ENCODE measurements at regions of chr3 and their contacts with region 1.

Region 1: GRCh38 chr3:46585799-46586693 is 19.9 kb upstream of the LRRC2 start:
- DNase-seq: peak; percentile 44 to 74
- H3K4me3 ChIP-seq: no peak overlapping the region
- H3K4me3 Mint-ChIP-seq: peak overlapping the region; percentile 37
- H3K27ac Mint-ChIP-seq: peak overlapping the region; percentile 93
- H3K4me1 ChIP-seq: peaks cover 32% of the 10 kb centered on the region
- H3K4me1 Mint-ChIP-seq: peaks cover 16% of the 10 kb centered on the region
- H3K27me3 ChIP-seq: no peaks in the 10 kb centered on the region
- H3K27me3 Mint-ChIP-seq: no peaks in the 10 kb centered on the region
- CTCF ChIP-seq: no peak

Region 2: GRCh38 chr3:46196261-46196957 is 389.6 kb before region 1 on chr3:
- CTCF ChIA-PET with region 1: no interaction called
- POLR2A ChIA-PET with region 1: no interaction called
- intact Hi-C with region 1: no loop called
- DNase-seq: no peak
- H3K4me3 ChIP-seq: no peak overlapping the region
- H3K4me3 Mint-ChIP-seq: no peak overlapping the region
- H3K27ac Mint-ChIP-seq: no peak overlapping the region
- H3K4me1 ChIP-seq: no peaks in the 10 kb centered on the region
- H3K4me1 Mint-ChIP-seq: no peaks in the 10 kb centered on the region
- H3K27me3 ChIP-seq: no peaks in the 10 kb centered on the region
- H3K27me3 Mint-ChIP-seq: no peaks in the 10 kb centered on the region
- CTCF ChIP-seq: no peak

Region 3: DNA sequence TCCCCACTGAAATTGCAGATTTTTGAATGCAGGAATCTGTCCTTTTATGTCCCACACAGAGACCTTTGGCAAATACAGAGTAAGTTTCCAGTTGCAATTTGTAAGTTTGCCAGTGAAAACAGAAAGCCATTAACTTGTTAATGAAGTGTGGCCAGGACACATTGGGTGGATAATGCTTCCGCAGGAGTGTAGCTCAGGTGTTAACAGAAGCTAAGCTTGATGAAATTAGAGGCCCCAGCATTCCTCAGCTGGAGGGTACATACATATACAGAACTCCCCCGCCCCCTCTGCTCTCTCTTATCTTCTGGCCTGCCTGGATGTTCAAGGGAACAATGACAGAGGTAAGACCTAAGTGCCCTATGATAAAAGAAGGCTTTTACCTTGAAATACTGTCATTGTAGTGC is 11.8 kb before region 1 on chr3:
- CTCF ChIA-PET with region 1: interaction called, 6 read pairs
- POLR2A ChIA-PET with region 1: interaction called, 9 read pairs
- intact Hi-C with region 1: loop called (anchors 1 kb)
- DNase-seq: peak; percentile 85 to 86
- H3K4me3 ChIP-seq: no peak overlapping the region
- H3K4me3 Mint-ChIP-seq: peak overlapping the region; percentile 38
- H3K27ac Mint-ChIP-seq: peak overlapping the region; percentile 66
- H3K4me1 ChIP-seq: peaks cover 25% of the 10 kb centered on the region
- H3K4me1 Mint-ChIP-seq: no peaks in the 10 kb centered on the region
- H3K27me3 ChIP-seq: no peaks in the 10 kb centered on the region
- H3K27me3 Mint-ChIP-seq: no peaks in the 10 kb centered on the region
- CTCF ChIP-seq: no peak

Region 4: DNA sequence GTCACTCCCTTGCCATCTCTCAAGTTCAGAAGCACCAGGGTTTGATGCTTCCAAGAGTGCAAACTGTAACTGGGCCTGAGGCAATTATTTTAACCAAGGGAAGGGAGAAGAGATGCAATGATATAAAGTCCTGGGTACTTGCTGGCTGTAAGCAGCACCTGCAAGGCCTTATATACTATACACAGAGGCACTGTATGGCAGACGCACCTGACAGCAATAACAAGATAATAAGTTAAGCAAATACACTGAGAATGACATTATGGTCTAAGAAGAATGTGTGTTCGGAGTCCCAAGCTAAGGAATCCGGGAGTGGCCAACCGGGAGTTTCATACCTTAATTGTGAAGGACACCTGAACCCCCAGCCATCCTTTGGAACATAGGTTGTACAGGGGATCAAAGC is 39.9 kb after region 1 on chr3:
- CTCF ChIA-PET with region 1: no interaction called
- POLR2A ChIA-PET with region 1: no interaction called
- intact Hi-C with region 1: loop called (anchors 1 kb)
- DNase-seq: peak; percentile 63 to 76
- H3K4me3 ChIP-seq: no peak overlapping the region
- H3K4me3 Mint-ChIP-seq: no peak overlapping the region
- H3K27ac Mint-ChIP-seq: peak overlapping the region; percentile 72
- H3K4me1 ChIP-seq: peaks cover 26% of the 10 kb centered on the region
- H3K4me1 Mint-ChIP-seq: peaks cover 20% of the 10 kb centered on the region
- H3K27me3 ChIP-seq: no peaks in the 10 kb centered on the region
- H3K27me3 Mint-ChIP-seq: no peaks in the 10 kb centered on the region
- CTCF ChIP-seq: no peak

Region 5: GRCh38 chr3:46695177-46695961 is 109.3 kb after region 1 on chr3:
- CTCF ChIA-PET with region 1: no interaction called
- POLR2A ChIA-PET with region 1: no interaction called
- intact Hi-C with region 1: loop called (anchors 10 kb)
- DNase-seq: peak; percentile 42 to 51
- H3K4me3 ChIP-seq: no peak overlapping the region
- H3K4me3 Mint-ChIP-seq: no peak overlapping the region
- H3K27ac Mint-ChIP-seq: no peak overlapping the region
- H3K4me1 ChIP-seq: peaks cover 9% of the 10 kb centered on the region; the same call in 1 of the 2 replicates
- H3K4me1 Mint-ChIP-seq: peaks cover 16% of the 10 kb centered on the region
- H3K27me3 ChIP-seq: no peaks in the 10 kb centered on the region
- H3K27me3 Mint-ChIP-seq: no peaks in the 10 kb centered on the region
- CTCF ChIP-seq: peak; percentile 25 to 26

Region 6: DNA sequence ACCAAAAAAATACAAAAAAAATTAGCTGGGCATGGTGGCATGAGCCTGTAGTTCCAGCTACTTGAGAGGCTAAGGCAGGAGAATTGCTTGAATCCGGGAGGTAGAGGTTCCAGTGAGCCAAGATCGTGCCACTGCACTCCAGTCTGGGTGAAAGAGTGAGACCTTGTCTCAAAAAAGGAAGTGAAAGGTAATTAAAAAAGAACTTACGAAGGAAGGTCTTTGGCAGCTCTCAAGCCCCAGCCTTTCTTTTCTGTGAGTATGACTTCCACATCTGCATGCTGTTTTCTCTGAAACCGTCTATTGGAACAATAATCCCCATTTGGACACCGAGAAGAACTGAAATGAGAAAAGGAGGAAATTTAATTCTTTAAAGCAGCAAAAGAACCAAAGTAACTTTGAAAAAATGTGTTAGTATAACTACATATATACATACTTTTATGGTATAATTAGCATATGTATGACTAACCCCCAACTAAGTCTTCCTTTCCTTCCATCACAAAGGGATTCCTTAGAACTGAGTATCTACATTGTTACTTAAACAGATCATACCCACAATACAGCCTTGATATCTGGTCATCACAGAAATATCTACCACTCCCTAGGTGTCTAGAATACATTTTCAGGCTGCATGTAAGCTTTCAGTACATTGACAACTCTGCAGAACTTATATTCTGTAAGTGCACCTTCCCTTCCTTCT is 527.8 kb after region 1 on chr3:
- CTCF ChIA-PET with region 1: no interaction called
- POLR2A ChIA-PET with region 1: no interaction called
- intact Hi-C with region 1: no loop called
- DNase-seq: no peak
- H3K4me3 ChIP-seq: no peak overlapping the region
- H3K4me3 Mint-ChIP-seq: no peak overlapping the region
- H3K27ac Mint-ChIP-seq: no peak overlapping the region
- H3K4me1 ChIP-seq: peaks cover 13% of the 10 kb centered on the region
- H3K4me1 Mint-ChIP-seq: peaks cover 13% of the 10 kb centered on the region
- H3K27me3 ChIP-seq: no peaks in the 10 kb centered on the region
- H3K27me3 Mint-ChIP-seq: no peaks in the 10 kb centered on the region
- CTCF ChIP-seq: no peak

Measured in Caco-2 (cell line).